ENCODE measurements at regions of chr10 and their contacts with region 1.

Region 1: DNA sequence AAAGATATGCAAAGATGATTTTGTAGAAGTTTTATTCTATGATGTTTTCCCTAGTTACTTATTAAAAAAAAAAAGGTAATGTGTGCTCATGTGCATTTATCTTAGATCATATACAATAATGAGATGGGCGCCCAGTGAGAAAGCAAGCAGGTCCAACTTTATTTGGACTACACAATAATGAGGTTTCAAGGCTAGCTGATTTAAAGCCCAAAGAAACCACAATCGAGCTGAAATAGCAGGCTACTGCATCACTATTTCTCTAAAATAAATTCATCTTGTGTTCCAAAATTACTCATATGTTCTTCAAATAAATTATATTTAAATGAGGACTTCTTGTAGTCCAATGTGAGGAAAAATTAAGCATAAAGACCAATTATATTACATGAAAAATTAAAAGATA is 110.1 kb downstream of the JMJD1C start:
- DNase-seq: no peak
- ATAC-seq: no peak
- H3K4me3 ChIP-seq: no peak overlapping the region
- H3K27ac ChIP-seq: no peak overlapping the region
- H3K4me1 ChIP-seq: no peaks in the 10 kb centered on the region
- H3K27me3 ChIP-seq: no peaks in the 10 kb centered on the region
- CTCF ChIP-seq: no peak
- POLR2A ChIP-seq: no peak
- RAD21 ChIP-seq: no peak

Region 2: DNA sequence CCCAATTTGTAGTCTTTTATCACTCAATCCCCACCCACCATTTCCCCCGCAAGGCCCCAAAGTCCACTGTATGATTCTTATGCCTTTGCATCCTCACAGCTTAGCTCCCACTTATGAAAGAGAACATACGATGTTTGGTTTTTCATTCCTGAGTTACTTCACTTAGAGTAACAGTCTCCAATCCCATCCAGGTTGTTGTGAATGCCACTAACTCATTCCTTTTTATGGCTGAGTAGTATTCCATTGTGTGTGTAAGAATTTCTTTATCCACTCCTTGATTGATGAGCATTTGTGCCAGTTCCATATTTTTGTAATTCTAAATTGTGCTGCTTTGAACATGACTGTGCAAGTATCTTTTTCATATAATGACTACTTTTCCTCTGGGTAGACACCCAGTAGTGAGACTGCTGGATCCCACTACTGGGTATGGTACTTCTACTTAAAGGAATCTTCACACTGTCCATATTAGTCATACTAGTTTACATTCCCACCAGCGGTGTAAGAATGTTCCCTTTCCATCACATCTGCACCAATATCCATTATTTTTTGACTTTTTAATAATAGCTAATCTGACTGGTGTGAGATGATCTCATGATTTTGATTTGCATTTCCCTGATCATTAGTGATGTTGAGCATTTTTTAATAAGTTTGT is 42.5 kb before region 1 on chr10:
- CTCF ChIA-PET with region 1: no interaction called
- POLR2A ChIA-PET with region 1: no interaction called
- dilution Hi-C with region 1: no loop called
- in situ Hi-C with region 1: no loop called
- intact Hi-C with region 1: loop called (anchors 5 kb)
- DNase-seq: no peak
- ATAC-seq: no peak
- H3K4me3 ChIP-seq: no peak overlapping the region
- H3K27ac ChIP-seq: no peak overlapping the region
- H3K4me1 ChIP-seq: no peaks in the 10 kb centered on the region
- H3K27me3 ChIP-seq: no peaks in the 10 kb centered on the region
- CTCF ChIP-seq: no peak
- POLR2A ChIP-seq: no peak
- RAD21 ChIP-seq: no peak

Region 3: DNA sequence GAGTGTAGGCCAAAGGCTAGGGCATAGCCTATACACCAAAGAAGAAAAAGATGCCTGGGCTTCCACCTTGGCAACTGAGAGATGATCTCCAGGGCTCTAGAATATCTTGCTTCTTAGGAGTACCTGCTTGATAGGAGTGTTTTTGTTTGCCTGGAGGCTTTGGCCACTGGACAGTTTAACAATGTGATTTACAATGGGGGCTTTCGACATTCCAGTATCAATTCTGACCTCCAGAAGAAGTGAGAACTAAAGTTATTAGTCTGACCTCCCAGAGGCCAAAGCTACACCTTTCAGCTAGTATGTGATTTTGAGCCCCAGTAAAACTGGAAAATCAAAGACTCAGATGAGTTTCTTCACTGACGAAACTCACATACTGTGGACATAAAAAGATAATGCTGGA is 14.0 kb after region 1 on chr10:
- CTCF ChIA-PET with region 1: no interaction called
- POLR2A ChIA-PET with region 1: no interaction called
- dilution Hi-C with region 1: no loop called
- in situ Hi-C with region 1: no loop called
- intact Hi-C with region 1: loop called (anchors 2 kb)
- DNase-seq: no peak
- ATAC-seq: no peak
- H3K4me3 ChIP-seq: no peak overlapping the region
- H3K27ac ChIP-seq: no peak overlapping the region
- H3K4me1 ChIP-seq: no peaks in the 10 kb centered on the region
- H3K27me3 ChIP-seq: no peaks in the 10 kb centered on the region
- CTCF ChIP-seq: no peak
- POLR2A ChIP-seq: no peak
- RAD21 ChIP-seq: no peak

Region 4: DNA sequence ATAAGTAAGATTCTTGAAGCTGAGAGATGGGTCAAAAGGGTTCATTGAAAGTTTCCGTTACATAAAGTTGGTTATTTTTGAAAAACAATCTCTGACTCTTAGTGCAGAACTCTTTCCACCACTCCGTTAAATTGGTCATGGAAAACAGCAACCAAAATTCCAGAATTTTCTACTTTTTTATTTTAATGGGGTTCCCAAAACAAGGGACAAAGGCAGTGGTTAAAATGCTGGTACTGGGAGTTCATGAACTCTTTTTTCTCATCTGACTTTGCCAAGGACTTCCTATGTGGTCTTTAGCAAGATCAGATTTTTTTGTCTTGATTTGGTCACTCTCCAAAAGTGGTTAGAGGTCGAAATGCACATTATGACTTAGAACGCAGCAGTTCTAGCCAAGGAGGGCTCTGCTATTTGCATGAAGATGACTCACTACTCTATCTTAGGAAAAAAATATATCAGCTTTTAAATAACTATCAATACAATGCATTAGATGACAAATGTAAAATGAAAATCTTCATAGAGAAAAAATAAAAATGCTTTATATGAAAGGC is 311.2 kb after region 1 on chr10:
- CTCF ChIA-PET with region 1: no interaction called
- POLR2A ChIA-PET with region 1: no interaction called
- dilution Hi-C with region 1: no loop called
- in situ Hi-C with region 1: no loop called
- intact Hi-C with region 1: no loop called
- DNase-seq: peak; percentile 94
- ATAC-seq: peak; percentile 76
- H3K4me3 ChIP-seq: no peak overlapping the region
- H3K27ac ChIP-seq: no peak overlapping the region
- H3K4me1 ChIP-seq: peaks cover 2% of the 10 kb centered on the region; the same call in 1 of the 2 replicates
- H3K27me3 ChIP-seq: no peaks in the 10 kb centered on the region
- CTCF ChIP-seq: no peak
- POLR2A ChIP-seq: no peak
- RAD21 ChIP-seq: no peak